CD4-positive, alpha-beta memory T cell (primary cell): ENCODE measurements at regions of chr17 and their contacts with region 1.

Region 1: DNA sequence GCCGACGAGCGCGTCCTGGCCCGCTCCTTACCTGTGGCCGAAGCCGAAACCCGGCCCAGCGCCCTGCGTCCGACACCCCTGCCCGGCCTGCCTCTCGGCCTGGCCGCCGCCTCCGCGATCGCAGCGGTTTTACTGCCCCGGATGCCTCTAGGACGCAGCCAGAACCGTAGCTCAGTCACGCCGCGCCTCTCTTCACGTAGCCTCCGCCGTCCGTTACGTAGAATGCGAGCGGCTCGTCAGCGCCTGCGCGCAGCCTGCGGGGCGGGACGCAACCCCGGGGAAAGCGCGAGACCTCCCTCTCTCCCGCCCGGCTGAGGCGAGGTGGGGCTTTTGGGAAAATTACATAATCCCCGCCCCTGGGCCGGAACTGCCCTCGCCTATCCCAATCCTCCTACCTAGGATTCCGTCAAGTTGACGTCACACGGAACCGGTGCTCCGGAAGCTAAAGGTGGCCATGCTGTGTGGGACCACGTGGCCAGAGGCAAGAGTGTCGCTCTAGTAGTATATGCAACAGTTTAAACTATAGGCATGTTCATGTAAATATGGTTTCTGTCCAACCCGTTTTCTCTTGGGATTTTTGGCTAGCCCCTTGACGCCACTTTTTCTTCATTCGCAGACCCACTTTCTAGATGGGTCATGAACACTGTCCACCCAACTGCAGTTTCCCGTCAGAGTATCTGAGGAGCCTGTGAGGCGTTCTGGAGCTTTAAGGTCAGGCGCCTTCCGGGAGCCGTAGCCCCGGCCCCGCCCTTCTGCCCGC is at the start of gene CCDC47:
- DNase-seq: peak; percentile 99
- H3K4me3 ChIP-seq: peak within 1 kb of the TSS; percentile 87 to 97
- H3K4me3 Mint-ChIP-seq: peak within 1 kb of the TSS; percentile 91 to 100 (median 99)
- H3K27ac ChIP-seq: peak within 1 kb of the TSS; percentile 99
- H3K27ac Mint-ChIP-seq: peak within 1 kb of the TSS; percentile 99 to 100 (median 100)
- H3K4me1 ChIP-seq: peaks cover 66% of the 10 kb centered on the region
- H3K4me1 Mint-ChIP-seq: peaks cover 33 to 81% (median 52%) of the 10 kb centered on the region in 4 donors
- H3K27me3 ChIP-seq: no peaks in the 10 kb centered on the region
- H3K27me3 Mint-ChIP-seq: no peaks in the 10 kb centered on the region
- total RNA-seq, gene CCDC47: 36.7 to 39.0 TPM

Region 2: DNA sequence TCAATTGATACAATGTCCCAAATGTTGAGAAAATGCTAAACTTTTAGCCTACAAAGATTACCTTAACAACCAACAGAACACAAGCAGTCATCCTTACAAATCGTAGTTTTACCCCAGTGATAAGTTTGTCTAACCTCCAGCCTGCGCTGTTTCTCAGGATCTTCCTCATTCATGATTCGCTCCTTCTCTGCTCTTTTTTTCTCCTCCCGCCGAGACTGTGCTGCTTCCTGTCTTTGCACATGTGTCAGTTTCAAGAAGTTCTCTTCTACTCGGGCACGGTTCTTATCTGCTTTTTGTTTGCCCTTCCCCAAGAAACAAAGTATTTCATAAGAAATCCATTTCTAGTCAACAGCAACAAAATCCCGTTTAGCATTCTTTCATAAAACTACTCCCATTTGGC is 21.8 kb before region 1 on chr17:
- CTCF ChIA-PET with region 1: interaction called, 3 read pairs
- POLR2A ChIA-PET with region 1: interaction called, 16 read pairs
- intact Hi-C with region 1: no loop called
- DNase-seq: peak in 4 of 5 donors; percentile 10 to 25 (median 18)
- H3K4me3 ChIP-seq: no peak overlapping the region
- H3K4me3 Mint-ChIP-seq: peak overlapping the region; percentile 25 to 78 (median 61)
- H3K27ac ChIP-seq: peak overlapping the region; percentile 33
- H3K27ac Mint-ChIP-seq: peak overlapping the region; percentile 69 to 93 (median 73)
- H3K4me1 ChIP-seq: peaks cover 10% of the 10 kb centered on the region
- H3K4me1 Mint-ChIP-seq: peaks cover 7 to 16% (median 8%) of the 10 kb centered on the region in 4 donors
- H3K27me3 ChIP-seq: no peaks in the 10 kb centered on the region
- H3K27me3 Mint-ChIP-seq: no peaks in the 10 kb centered on the region

Region 3: GRCh38 chr17:63827002-63827771 is 53.6 kb after region 1 on chr17 and contains the starts of genes FTSJ3 and PSMC5:
- CTCF ChIA-PET with region 1: interaction called, 4 read pairs
- POLR2A ChIA-PET with region 1: interaction called, 34 read pairs
- intact Hi-C with region 1: loop called (anchors 1 kb)
- DNase-seq: peak; percentile 96 to 98 (median 97)
- H3K4me3 ChIP-seq: peak within 1 kb of the TSS; percentile 93
- H3K4me3 Mint-ChIP-seq: peak within 1 kb of the TSS; percentile 93 to 100 (median 98)
- H3K27ac ChIP-seq: peak within 1 kb of the TSS; percentile 90
- H3K27ac Mint-ChIP-seq: peak within 1 kb of the TSS; percentile 95 to 100 (median 100)
- H3K4me1 ChIP-seq: peaks cover 61% of the 10 kb centered on the region
- H3K4me1 Mint-ChIP-seq: peaks cover 46 to 92% (median 74%) of the 10 kb centered on the region in 4 donors
- H3K27me3 ChIP-seq: no peaks in the 10 kb centered on the region
- H3K27me3 Mint-ChIP-seq: no peaks in the 10 kb centered on the region
- total RNA-seq, gene FTSJ3: 62.1 to 62.2 TPM
- total RNA-seq, gene PSMC5: 121 TPM

Region 4: DNA sequence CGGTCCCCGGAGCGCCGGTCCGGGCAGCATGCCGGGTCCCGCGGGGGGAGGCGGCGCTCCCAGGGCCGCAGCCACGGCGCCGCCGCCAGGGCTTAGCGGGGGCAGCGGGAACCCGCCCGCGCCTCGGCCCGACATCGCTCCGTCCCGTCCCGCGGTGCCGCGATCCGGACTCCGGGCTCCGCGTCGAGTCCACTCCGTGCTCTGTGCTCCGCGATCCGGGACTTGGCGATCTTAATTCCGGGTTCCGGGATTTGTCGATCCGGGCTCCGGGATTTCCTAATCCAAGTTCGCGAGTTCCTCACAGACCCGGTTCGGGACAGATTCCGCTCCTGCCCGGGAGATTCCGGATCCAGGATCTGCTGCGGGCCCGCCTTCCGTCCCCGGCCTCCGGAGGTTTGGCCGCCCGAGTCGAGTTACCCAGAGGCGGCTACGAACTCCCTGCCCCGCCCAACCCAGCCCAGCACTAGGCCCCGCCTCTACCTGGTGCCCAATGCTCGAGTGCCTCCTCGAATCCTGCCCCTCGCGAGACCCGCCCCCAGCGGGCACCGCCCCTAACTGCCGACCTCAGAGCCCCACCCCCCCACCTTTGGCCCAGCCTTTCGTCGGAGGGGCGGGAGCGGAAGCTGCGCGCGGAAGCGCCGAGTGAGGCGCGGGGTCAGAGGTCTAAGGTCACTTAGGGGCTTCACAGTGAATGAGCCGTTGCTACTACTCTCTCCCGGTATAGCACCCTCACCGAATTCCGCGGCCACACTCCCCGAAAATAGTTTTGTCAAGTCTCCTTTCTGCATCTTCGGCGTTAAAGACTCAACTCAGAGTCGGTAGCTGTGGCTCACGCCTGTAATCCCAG is 69.2 kb after region 1 on chr17 and contains the start of gene SMARCD2:
- CTCF ChIA-PET with region 1: interaction called, 6 read pairs
- POLR2A ChIA-PET with region 1: interaction called, 66 read pairs
- intact Hi-C with region 1: loop called (anchors 1 kb)
- DNase-seq: peak; percentile 97 to 98 (median 98)
- H3K4me3 ChIP-seq: peak within 1 kb of the TSS; percentile 58 to 72
- H3K4me3 Mint-ChIP-seq: peak within 1 kb of the TSS; percentile 86 to 97 (median 94)
- H3K27ac ChIP-seq: peak within 1 kb of the TSS; percentile 84
- H3K27ac Mint-ChIP-seq: peak within 1 kb of the TSS; percentile 87 to 96 (median 95)
- H3K4me1 ChIP-seq: peaks cover 48% of the 10 kb centered on the region
- H3K4me1 Mint-ChIP-seq: peaks cover 17 to 57% (median 35%) of the 10 kb centered on the region in 4 donors
- H3K27me3 ChIP-seq: no peaks in the 10 kb centered on the region
- H3K27me3 Mint-ChIP-seq: no peaks in the 10 kb centered on the region
- total RNA-seq, gene SMARCD2: 113 to 114 TPM

Region 5: DNA sequence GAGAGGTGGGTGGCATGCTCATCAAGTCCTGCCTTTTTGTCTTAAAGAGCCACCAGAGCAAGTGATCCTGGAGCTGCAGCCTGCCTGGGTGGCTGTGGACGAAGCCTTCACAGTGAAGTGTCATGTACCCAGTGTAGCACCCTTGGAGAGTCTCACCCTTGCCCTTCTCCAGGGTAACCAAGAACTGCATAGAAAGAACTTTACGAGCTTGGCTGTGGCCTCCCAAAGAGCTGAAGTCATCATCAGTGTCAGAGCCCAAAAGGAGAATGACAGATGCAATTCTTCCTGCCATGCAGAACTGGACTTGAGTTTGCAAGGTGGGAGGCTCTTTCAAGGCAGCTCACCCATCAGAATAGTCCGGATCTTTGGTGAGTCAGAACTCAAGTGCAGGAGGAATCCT is 85.7 kb after region 1 on chr17:
- CTCF ChIA-PET with region 1: no interaction called
- POLR2A ChIA-PET with region 1: no interaction called
- intact Hi-C with region 1: no loop called
- DNase-seq: no peak
- H3K4me3 ChIP-seq: no peak overlapping the region
- H3K4me3 Mint-ChIP-seq: no peak overlapping the region
- H3K27ac ChIP-seq: no peak overlapping the region
- H3K27ac Mint-ChIP-seq: no peak overlapping the region
- H3K4me1 ChIP-seq: no peaks in the 10 kb centered on the region
- H3K4me1 Mint-ChIP-seq: no peaks in the 10 kb centered on the region
- H3K27me3 ChIP-seq: no peaks in the 10 kb centered on the region
- H3K27me3 Mint-ChIP-seq: no peaks in the 10 kb centered on the region

Region 6: DNA sequence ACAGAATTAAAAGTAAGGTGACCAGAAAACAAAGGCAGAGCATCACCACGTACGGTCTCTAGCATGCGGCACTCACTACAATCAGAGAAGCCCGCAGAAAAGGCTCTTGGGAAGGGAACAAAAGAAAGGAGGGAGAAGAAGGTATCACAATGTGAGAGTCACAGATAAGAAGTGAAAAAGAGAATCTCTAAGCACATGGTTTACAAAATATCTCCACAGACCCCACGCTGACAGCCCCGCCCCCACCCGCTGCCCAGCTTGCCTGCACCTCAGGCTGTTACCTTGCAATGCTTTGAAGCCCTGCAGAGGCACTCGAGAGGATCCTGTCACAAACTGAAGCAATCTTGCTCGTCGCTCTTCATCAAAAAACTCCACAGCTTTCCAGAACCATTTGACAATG is 773.8 kb after region 1 on chr17:
- CTCF ChIA-PET with region 1: no interaction called
- POLR2A ChIA-PET with region 1: no interaction called
- intact Hi-C with region 1: no loop called
- DNase-seq: no peak
- H3K4me3 ChIP-seq: no peak overlapping the region
- H3K4me3 Mint-ChIP-seq: no peak overlapping the region
- H3K27ac ChIP-seq: no peak overlapping the region
- H3K27ac Mint-ChIP-seq: peak overlapping the region in 1 of 7 donors; percentile 78
- H3K4me1 ChIP-seq: no peaks in the 10 kb centered on the region
- H3K4me1 Mint-ChIP-seq: peaks cover 0 to 2% (median 0%) of the 10 kb centered on the region in 4 donors
- H3K27me3 ChIP-seq: no peaks in the 10 kb centered on the region
- H3K27me3 Mint-ChIP-seq: no peaks in the 10 kb centered on the region